Posterior vena cava (tissue), 2 donors: ENCODE measurements at regions of chr3 and their contacts with region 1.

Region 1: GRCh38 chr3:65449841-65450428 is 588.8 kb downstream of the MAGI1 start:
- DNase-seq: no peak

Region 2: DNA sequence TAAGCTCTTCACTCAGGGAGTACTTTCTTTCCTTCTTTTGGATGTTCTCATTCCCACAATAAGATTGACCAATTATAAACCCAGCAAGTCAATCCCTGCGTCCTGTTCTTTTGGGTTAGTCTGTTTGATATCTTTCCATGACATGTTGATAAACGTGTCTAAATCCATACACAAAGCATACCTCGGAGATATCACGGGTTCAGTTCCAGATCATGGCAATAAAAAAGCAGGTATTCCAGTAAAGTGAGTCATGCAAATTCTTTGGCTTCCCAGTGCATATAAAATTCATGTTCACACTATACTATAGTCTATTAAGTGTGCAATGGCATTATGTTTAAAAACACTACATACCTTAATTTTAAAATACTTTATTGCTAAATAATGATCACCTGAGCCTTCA is 78.9 kb before region 1 on chr3:
- intact Hi-C with region 1: loop called in 1 of 2 experiments (anchors 2 kb)
- DNase-seq: no peak

Region 3: GRCh38 chr3:65713016-65713415 is 263.1 kb after region 1 on chr3:
- intact Hi-C with region 1: no loop called
- DNase-seq: no peak

Region 4: GRCh38 chr3:66317750-66318376 is 867.9 kb after region 1 on chr3:
- intact Hi-C with region 1: loop called in 1 of 2 experiments (anchors 5 kb)
- DNase-seq: no peak